OCI-LY7 (cell line): ENCODE measurements at regions of chr9 and their contacts with region 1.

Region 1: DNA sequence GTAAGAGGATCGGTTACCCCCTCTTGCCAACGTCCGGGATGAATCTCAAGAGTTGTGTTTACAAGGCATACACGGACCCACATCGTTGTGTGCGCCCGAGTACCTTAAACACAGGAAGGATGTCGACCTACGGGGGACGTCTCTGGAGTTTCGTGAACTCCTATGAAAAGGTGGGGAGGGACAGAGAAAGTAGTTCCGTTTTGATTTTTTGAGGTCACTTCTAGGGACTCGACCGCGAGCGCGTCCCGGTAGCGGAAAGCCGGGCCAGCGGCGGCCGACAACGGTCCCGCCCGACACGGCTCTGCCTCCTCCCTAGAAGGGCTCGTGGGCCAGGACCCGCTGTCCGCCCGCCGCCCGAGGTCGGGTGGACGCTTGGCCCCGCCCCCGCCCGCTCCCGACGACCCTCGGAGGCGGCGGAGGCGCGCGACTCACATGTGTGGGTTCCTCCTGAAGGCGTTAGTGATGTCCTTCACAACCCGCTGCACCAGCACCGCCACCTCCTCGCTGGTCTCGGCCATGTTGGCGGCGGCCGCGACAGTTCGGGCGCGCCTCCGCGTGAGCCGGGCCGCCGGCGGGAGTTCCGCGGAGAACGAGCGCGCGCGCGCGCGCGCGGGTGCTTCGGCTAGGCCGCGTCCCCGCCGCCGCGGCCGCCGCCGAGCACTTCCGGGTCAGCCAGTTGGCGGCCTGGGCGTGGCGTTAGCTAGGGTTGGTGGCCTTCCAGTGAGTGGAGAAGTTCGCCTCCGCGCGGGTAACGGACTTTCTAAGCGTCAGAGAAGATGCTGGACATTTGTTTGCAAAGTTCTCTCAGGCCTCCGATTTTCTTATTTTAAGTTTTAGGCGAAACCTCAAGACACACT is at the start of gene PTAR1:
- DNase-seq: peak; percentile 95
- H3K4me3 ChIP-seq: peak within 1 kb of the TSS; percentile 76
- H3K27ac ChIP-seq: peak within 1 kb of the TSS; percentile 86
- H3K4me1 ChIP-seq: peaks cover 21% of the 10 kb centered on the region
- CTCF ChIP-seq: no peak
- total RNA-seq, gene PTAR1: 68.8 and 71.1 TPM in 2 replicates

Region 2: GRCh38 chr9:68779558-68780384 is 979.9 kb before region 1 on chr9:
- CTCF ChIA-PET with region 1: no interaction called
- POLR2A ChIA-PET with region 1: no interaction called
- intact Hi-C with region 1: loop called (anchors 10 kb)
- DNase-seq: peak; percentile 96
- H3K4me3 ChIP-seq: peak overlapping the region; percentile 85
- H3K27ac ChIP-seq: peak overlapping the region; percentile 70
- H3K4me1 ChIP-seq: peaks cover 41% of the 10 kb centered on the region
- CTCF ChIP-seq: peak; percentile 78

Region 3: GRCh38 chr9:69157751-69158466 is 601.7 kb before region 1 on chr9:
- CTCF ChIA-PET with region 1: no interaction called
- POLR2A ChIA-PET with region 1: no interaction called
- intact Hi-C with region 1: no loop called
- DNase-seq: no peak
- H3K4me3 ChIP-seq: no peak overlapping the region
- H3K27ac ChIP-seq: no peak overlapping the region
- H3K4me1 ChIP-seq: peaks cover 8% of the 10 kb centered on the region
- CTCF ChIP-seq: peak; percentile 56

Region 4: DNA sequence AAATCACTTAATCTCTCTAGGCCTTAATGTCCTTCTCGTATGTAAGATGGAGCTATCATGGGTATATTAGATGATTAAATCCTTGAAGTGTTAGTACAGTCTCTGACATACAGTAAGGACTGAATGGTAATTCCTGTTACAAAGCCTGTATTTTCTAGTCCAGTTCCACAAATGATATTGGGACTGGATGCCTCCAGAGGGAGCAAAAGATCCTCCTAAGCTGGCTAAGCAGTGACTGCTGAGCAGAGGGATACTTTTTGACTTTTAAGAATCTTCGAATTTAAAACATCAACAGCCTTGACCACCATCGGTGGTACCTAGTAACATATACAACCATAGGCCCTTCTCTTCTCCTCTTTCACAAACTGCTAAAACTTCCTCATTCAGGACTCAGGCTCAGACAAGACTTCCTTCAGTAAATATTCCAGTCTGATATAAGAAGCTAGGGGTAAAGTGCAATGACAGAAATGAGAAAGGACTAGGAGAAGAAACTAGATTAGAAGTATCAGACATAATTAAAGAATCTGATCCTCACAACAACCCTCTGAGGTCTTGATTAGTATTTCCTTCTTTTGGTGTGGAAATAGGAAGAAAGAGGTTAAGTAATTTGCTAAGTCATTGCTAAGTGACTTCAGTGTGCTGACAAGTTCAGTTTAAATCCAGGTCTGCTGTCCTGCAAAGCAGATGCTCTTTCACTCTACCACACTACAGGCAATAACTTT is 13.8 kb before region 1 on chr9:
- CTCF ChIA-PET with region 1: no interaction called
- POLR2A ChIA-PET with region 1: interaction called, 20 read pairs
- intact Hi-C with region 1: no loop called
- DNase-seq: no peak
- H3K4me3 ChIP-seq: no peak overlapping the region
- H3K27ac ChIP-seq: no peak overlapping the region
- H3K4me1 ChIP-seq: peaks cover 22% of the 10 kb centered on the region
- CTCF ChIP-seq: no peak

Region 5: DNA sequence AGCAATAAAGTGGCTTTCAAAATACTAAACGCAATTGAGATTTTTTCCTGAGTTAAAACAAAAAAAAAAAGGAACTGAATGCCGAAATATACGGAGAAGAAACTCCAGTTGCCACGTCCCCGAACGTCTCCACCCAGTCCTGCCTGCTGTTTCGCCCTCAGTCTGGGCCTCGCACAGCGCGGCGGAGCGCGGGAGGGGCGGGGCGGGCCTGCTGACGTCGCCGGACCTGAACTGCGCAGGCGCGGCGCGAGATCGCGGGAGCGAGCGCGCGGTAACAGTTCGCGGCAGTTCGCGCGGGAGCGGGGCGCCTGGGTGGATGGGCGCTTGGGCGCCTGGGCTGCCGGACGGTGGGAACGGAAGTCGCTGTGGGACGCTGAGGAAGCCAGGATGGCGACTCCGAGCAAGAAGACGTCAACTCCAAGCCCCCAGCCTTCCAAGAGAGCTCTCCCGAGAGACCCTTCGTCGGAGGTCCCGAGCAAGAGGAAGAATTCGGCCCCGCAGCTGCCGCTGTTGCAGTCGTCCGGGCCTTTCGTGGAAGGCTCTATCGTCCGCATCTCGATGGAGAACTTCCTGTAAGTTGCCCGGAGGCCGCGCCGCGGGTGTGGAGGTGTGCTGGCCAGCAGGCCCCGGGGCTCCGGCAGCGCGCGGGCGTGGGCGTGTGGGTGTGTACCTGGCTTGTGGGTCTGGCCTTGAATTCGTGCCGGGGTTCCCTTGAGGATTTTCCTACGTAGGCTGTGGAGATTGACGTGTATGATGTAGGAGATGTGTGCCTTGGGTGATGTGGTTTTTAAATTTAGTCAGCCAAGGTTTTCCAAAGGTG is 499.3 kb after region 1 on chr9 and contains the start of gene SMC5:
- CTCF ChIA-PET with region 1: no interaction called
- POLR2A ChIA-PET with region 1: no interaction called
- intact Hi-C with region 1: loop called (anchors 1 kb)
- DNase-seq: peak; percentile 90
- H3K4me3 ChIP-seq: peak within 1 kb of the TSS; percentile 89
- H3K27ac ChIP-seq: peak within 1 kb of the TSS; percentile 54
- H3K4me1 ChIP-seq: peaks cover 34% of the 10 kb centered on the region
- CTCF ChIP-seq: no peak
- total RNA-seq, gene SMC5: 34.9 and 42.0 TPM in 2 replicates

Region 6: DNA sequence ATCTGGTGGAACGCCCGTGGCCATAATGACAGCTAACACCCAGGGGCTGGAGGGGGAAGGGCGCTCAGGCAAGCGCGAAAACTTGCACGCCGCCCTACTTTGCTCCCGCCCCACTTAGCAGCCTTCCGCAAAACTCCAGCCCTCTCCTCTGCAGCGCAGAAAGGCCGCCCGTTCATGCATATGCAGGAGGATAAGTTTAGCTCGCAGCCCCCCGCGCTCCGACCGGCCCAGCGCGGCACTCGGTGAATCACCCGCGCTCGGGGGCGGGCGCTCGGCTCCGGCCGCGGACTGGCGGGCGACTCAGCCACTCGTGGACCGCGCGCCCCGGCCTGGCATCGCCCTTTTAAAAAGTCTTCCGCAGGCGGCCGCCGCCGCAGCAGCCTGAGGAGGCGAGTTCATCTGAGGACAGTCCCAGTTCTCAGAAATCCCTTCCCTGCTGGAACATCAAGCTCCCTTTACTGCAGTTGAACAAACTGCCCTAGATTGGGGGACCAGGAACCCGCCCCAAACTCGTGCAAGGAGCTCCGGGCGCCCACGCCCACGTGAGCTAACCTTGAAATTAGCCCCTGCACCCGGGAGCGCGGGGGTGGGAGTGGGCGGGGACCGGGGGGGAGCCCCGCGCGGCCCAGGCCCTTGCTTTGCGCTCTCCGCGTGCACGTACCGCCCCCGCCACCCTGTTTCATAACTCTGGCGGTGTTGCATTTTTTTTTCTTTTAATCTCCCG is 659.3 kb after region 1 on chr9:
- CTCF ChIA-PET with region 1: no interaction called
- POLR2A ChIA-PET with region 1: no interaction called
- intact Hi-C with region 1: loop called (anchors 5 kb)
- DNase-seq: peak; percentile 83
- H3K4me3 ChIP-seq: peak overlapping the region; percentile 75
- H3K27ac ChIP-seq: peak overlapping the region; percentile 37
- H3K4me1 ChIP-seq: peaks cover 43% of the 10 kb centered on the region
- CTCF ChIP-seq: no peak